ENCODE measurements at regions of chr9 and their contacts with region 1.

Region 1: GRCh38 chr9:34252670-34253459 is 74.0 kb downstream of the UBAP1 start:
- DNase-seq: peak; percentile 51 to 71 (median 53)
- H3K4me3 ChIP-seq: no peak overlapping the region
- H3K27ac ChIP-seq: no peak overlapping the region
- H3K4me1 ChIP-seq: no peaks in the 10 kb centered on the region
- H3K27me3 ChIP-seq: no peaks in the 10 kb centered on the region

Region 2: DNA sequence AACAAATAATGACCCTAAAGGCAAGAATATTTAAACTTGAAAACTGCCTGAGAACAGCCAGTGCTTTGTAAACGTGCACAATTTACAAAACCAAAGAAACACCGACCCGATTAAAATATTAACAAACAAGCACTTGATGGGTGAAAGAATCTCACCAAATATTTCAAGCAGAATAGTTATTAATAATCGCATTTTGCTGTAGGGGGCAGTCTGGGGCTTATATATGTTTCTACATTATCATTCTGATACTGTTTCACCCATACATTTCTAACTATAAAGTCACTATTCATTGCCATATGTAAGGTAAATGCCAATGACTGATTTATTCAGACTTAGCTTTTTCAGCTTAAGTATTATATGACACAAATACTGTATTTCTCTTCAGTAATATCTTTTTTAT is 241.9 kb before region 1 on chr9:
- CTCF ChIA-PET with region 1: interaction called, 25 read pairs
- POLR2A ChIA-PET with region 1: no interaction called
- DNase-seq: peak; percentile 23 to 53 (median 46)
- H3K4me3 ChIP-seq: no peak overlapping the region
- H3K27ac ChIP-seq: no peak overlapping the region
- H3K4me1 ChIP-seq: no peaks in the 10 kb centered on the region
- H3K27me3 ChIP-seq: no peaks in the 10 kb centered on the region

Region 3: DNA sequence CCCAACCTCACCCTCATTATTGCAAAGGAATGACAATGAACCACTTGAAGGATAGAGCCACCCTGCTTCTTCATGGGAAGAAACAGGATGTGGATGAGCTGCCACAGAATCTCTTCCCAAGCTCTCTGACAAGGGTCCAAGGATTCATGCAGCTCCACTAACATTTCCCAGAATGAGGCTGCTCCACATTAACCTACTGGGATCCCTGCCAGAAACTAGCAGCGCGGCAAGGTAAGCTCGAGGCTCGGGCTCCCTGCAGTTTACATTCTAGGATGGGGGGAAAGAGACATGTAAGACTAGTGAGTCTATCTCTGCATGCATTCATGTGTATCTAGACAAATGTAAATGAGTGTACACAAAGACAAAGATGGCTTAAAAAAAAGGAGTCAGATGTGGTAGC is 138.4 kb before region 1 on chr9:
- CTCF ChIA-PET with region 1: interaction called, 18 read pairs
- POLR2A ChIA-PET with region 1: no interaction called
- DNase-seq: no peak
- H3K4me3 ChIP-seq: no peak overlapping the region
- H3K27ac ChIP-seq: no peak overlapping the region
- H3K4me1 ChIP-seq: no peaks in the 10 kb centered on the region
- H3K27me3 ChIP-seq: no peaks in the 10 kb centered on the region

Region 4: GRCh38 chr9:34227445-34227844 is 25.4 kb before region 1 on chr9:
- CTCF ChIA-PET with region 1: interaction called, 14 read pairs
- POLR2A ChIA-PET with region 1: no interaction called
- DNase-seq: no peak
- H3K4me3 ChIP-seq: no peak overlapping the region
- H3K27ac ChIP-seq: no peak overlapping the region
- H3K4me1 ChIP-seq: no peaks in the 10 kb centered on the region
- H3K27me3 ChIP-seq: no peaks in the 10 kb centered on the region

Region 5: DNA sequence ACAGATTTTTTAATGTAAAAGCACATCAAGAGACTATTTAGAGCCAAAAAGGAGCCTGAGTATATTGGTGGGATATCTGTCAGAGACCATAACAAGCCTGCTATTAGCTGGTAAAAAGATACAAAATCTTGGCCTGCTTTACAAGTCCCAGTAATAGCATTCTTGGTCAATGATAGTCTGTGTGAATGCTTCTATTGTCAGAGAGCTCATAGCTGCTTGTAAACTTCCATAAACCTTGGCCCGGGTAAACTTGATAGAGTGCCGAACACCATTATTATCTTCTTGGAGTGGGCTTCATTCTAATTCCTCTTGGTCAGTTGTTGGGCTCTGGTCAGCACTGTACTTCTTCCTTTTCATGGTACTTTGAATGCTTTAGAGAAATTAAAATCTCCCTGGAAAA is 10.0 kb before region 1 on chr9:
- CTCF ChIA-PET with region 1: interaction called, 66 read pairs
- POLR2A ChIA-PET with region 1: no interaction called
- DNase-seq: no peak
- H3K4me3 ChIP-seq: no peak overlapping the region
- H3K27ac ChIP-seq: no peak overlapping the region
- H3K4me1 ChIP-seq: peaks cover 10 to 20% (median 14%) of the 10 kb centered on the region in 4 experiments
- H3K27me3 ChIP-seq: no peaks in the 10 kb centered on the region

Region 6: GRCh38 chr9:34262939-34263338 is 10.1 kb after region 1 on chr9:
- CTCF ChIA-PET with region 1: interaction called, 34 read pairs
- POLR2A ChIA-PET with region 1: no interaction called
- DNase-seq: no peak
- H3K4me3 ChIP-seq: no peak overlapping the region
- H3K27ac ChIP-seq: no peak overlapping the region
- H3K4me1 ChIP-seq: no peaks in the 10 kb centered on the region
- H3K27me3 ChIP-seq: no peaks in the 10 kb centered on the region

Region 7: GRCh38 chr9:34349324-34349723 is 96.5 kb after region 1 on chr9:
- CTCF ChIA-PET with region 1: no interaction called
- POLR2A ChIA-PET with region 1: no interaction called
- DNase-seq: no peak
- H3K4me3 ChIP-seq: no peak overlapping the region
- H3K27ac ChIP-seq: no peak overlapping the region
- H3K4me1 ChIP-seq: no peaks in the 10 kb centered on the region
- H3K27me3 ChIP-seq: no peaks in the 10 kb centered on the region

Measured in common myeloid progenitor, CD34-positive (primary cell).